Heart right ventricle (tissue), 16 donors: ENCODE measurements at regions of chr12 and their contacts with region 1.

Region 1: GRCh38 chr12:66453844-66454243 is 151.6 kb downstream of the HELB start:
- DNase-seq: no peak
- ATAC-seq: no peak
- H3K4me3 ChIP-seq: no peak overlapping the region
- H3K27ac ChIP-seq: no peak overlapping the region
- H3K4me1 ChIP-seq: no peaks in the 10 kb centered on the region
- H3K27me3 ChIP-seq: peaks cover 0 to 10% (median 0%) of the 10 kb centered on the region in 7 donors
- CTCF ChIP-seq: no peak

Region 2: GRCh38 chr12:66441900-66442559 is 11.8 kb before region 1 on chr12:
- intact Hi-C with region 1: loop called in 1 of 10 experiments (anchors 2 kb)
- DNase-seq: no peak
- ATAC-seq: no peak
- H3K4me3 ChIP-seq: no peak overlapping the region
- H3K27ac ChIP-seq: no peak overlapping the region
- H3K4me1 ChIP-seq: no peaks in the 10 kb centered on the region
- H3K27me3 ChIP-seq: no peaks in the 10 kb centered on the region
- CTCF ChIP-seq: no peak